Sciatic nerve (tissue), 2 donors: ENCODE measurements at regions of chr16 and their contacts with region 1.

Region 1: GRCh38 chr16:74372953-74373846 is 2.9 kb upstream of the NPIPB15 start:
- DNase-seq: no peak
- ATAC-seq: no peak

Region 2: DNA sequence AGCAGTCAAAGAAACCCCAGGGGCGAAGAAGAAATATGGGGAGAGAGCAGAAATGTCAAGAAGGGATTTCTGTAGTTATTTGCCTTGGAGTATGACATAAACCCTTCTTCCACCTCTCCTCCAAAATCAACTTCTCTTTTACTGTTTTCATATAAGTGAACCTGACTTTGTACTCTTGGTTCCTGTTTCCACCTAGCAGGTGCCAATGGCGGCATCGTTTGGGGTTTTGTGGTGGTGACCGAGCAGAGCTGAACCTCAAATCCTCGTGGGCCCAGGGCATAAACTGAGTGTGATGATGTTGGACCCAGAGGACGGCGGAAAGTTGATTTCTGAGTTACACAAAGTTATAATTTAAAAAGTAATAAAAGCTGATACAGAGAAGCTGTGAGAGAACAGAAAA is 116.1 kb before region 1 on chr16:
- intact Hi-C with region 1: no loop called
- DNase-seq: no peak
- ATAC-seq: no peak

Region 3: DNA sequence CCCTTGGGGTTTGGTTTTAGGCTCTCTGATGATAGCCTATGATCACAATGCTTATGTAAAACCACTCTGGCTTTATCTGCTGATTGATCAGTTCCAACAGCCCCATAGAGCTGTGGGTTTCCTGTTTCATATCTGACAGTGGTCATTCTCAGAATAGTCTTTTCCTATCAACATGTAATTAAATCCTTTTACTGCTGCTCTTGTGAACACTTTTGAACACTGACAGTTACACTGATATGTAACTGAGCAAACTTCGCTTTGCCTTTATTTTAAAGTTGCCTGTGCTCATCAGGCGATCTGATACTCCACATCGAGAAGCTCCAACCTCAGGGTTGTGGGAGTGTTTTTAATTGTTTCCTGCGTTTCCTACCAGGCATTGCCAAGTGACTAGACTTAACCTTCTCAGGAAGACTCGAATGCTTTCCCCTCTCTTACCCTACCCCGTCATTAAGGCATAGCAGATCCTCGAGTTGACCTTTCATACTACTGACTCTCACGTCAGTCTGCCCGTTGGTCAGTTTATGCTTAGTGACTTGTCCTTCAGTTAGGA is 65.4 kb after region 1 on chr16:
- intact Hi-C with region 1: no loop called
- DNase-seq: no peak
- ATAC-seq: no peak

Region 4: GRCh38 chr16:74606521-74607310 is 233.5 kb after region 1 on chr16 and contains the start of gene GLG1:
- intact Hi-C with region 1: no loop called
- DNase-seq: peak; percentile 96
- ATAC-seq: peak; percentile 98
- total RNA-seq, gene GLG1: 145 TPM

Region 5: GRCh38 chr16:74793571-74793970 is 420.4 kb after region 1 on chr16:
- intact Hi-C with region 1: no loop called
- DNase-seq: no peak
- ATAC-seq: no peak

Region 6: GRCh38 chr16:74874912-74875546 is 501.8 kb after region 1 on chr16:
- intact Hi-C with region 1: loop called (anchors 5 kb)
- DNase-seq: no peak
- ATAC-seq: no peak